Psoas muscle (tissue), 8 donors: ENCODE measurements at regions of chr12 and their contacts with region 1.

Region 1: DNA sequence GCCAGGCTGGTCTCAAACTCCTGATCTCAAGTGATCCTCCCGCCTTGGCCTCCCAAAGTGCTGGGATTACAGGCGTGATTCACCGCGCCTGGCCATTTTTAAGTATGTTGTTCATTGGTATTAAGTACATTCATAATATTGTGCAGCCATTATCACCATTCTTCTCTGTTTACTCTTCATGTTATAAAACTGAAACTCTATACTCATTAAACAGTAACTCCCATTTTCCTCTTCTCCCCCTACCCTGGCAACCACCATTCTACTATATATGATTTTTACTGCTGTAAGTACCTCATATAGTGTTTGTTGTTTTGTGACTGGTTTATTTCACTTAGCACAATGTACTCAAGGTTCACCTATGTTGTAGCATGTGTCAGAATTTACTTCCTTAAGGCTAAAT is 23.1 kb downstream of the METAP2 start:
- DNase-seq: no peak
- ATAC-seq: no peak
- H3K4me3 ChIP-seq: no peak overlapping the region
- H3K27ac ChIP-seq: no peak overlapping the region
- H3K4me1 ChIP-seq: no peaks in the 10 kb centered on the region
- H3K27me3 ChIP-seq: no peaks in the 10 kb centered on the region
- CTCF ChIP-seq: no peak

Region 2: GRCh38 chr12:95054206-95054605 is 442.8 kb before region 1 on chr12:
- intact Hi-C with region 1: loop called in 1 of 2 experiments (anchors 10 kb)
- DNase-seq: no peak
- ATAC-seq: no peak
- H3K4me3 ChIP-seq: no peak overlapping the region
- H3K27ac ChIP-seq: no peak overlapping the region
- H3K4me1 ChIP-seq: no peaks in the 10 kb centered on the region
- H3K27me3 ChIP-seq: no peaks in the 10 kb centered on the region
- CTCF ChIP-seq: no peak

Region 3: GRCh38 chr12:95318071-95318545 is 178.9 kb before region 1 on chr12:
- intact Hi-C with region 1: no loop called
- DNase-seq: no peak
- ATAC-seq: no peak
- H3K4me3 ChIP-seq: no peak overlapping the region
- H3K27ac ChIP-seq: no peak overlapping the region
- H3K4me1 ChIP-seq: no peaks in the 10 kb centered on the region
- H3K27me3 ChIP-seq: no peaks in the 10 kb centered on the region
- CTCF ChIP-seq: no peak